ENCODE measurements at regions of chr10 and their contacts with region 1.

Region 1: GRCh38 chr10:132536971-132537712 is 445 bp upstream of the INPP5A start:
- DNase-seq: peak; percentile 100
- ATAC-seq: peak; percentile 89
- H3K4me3 Mint-ChIP-seq: peak overlapping the region; percentile 64
- H3K27ac Mint-ChIP-seq: no peak overlapping the region
- H3K4me1 Mint-ChIP-seq: peaks cover 52% of the 10 kb centered on the region
- H3K27me3 Mint-ChIP-seq: no peaks in the 10 kb centered on the region
- CTCF ChIP-seq: no peak

Region 2: GRCh38 chr10:132027423-132027983 is 509.6 kb before region 1 on chr10:
- CTCF ChIA-PET with region 1: no interaction called
- POLR2A ChIA-PET with region 1: no interaction called
- intact Hi-C with region 1: no loop called
- DNase-seq: no peak
- ATAC-seq: no peak
- H3K4me3 Mint-ChIP-seq: no peak overlapping the region
- H3K27ac Mint-ChIP-seq: no peak overlapping the region
- H3K4me1 Mint-ChIP-seq: peaks cover 4% of the 10 kb centered on the region
- H3K27me3 Mint-ChIP-seq: peaks cover 33% of the 10 kb centered on the region
- CTCF ChIP-seq: no peak

Region 3: GRCh38 chr10:132307823-132308587 is 229.1 kb before region 1 on chr10 and contains the start of gene STK32C:
- CTCF ChIA-PET with region 1: no interaction called
- POLR2A ChIA-PET with region 1: no interaction called
- intact Hi-C with region 1: loop called (anchors 1 kb)
- DNase-seq: peak; percentile 79
- ATAC-seq: peak; percentile 90
- H3K4me3 Mint-ChIP-seq: peak within 1 kb of the TSS; percentile 86
- H3K27ac Mint-ChIP-seq: no peak within 1 kb of the TSS
- H3K4me1 Mint-ChIP-seq: peaks cover 11% of the 10 kb centered on the region
- H3K27me3 Mint-ChIP-seq: peaks cover 11% of the 10 kb centered on the region
- CTCF ChIP-seq: no peak
- total RNA-seq, gene STK32C: 11.0 and 13.8 TPM in 2 replicates

Region 4: GRCh38 chr10:132396495-132397035 is 140.6 kb before region 1 on chr10:
- CTCF ChIA-PET with region 1: no interaction called
- POLR2A ChIA-PET with region 1: interaction called, 3 read pairs
- intact Hi-C with region 1: loop called (anchors 1 kb)
- DNase-seq: peak; percentile 74
- ATAC-seq: peak; percentile 71
- H3K4me3 Mint-ChIP-seq: no peak overlapping the region
- H3K27ac Mint-ChIP-seq: no peak overlapping the region
- H3K4me1 Mint-ChIP-seq: peaks cover 59% of the 10 kb centered on the region
- H3K27me3 Mint-ChIP-seq: no peaks in the 10 kb centered on the region
- CTCF ChIP-seq: no peak

Region 5: GRCh38 chr10:132407814-132408278 is 129.3 kb before region 1 on chr10:
- CTCF ChIA-PET with region 1: no interaction called
- POLR2A ChIA-PET with region 1: no interaction called
- intact Hi-C with region 1: no loop called
- DNase-seq: no peak
- ATAC-seq: peak; percentile 53
- H3K4me3 Mint-ChIP-seq: peak overlapping the region; percentile 19
- H3K27ac Mint-ChIP-seq: peak overlapping the region; percentile 35
- H3K4me1 Mint-ChIP-seq: peaks cover 35% of the 10 kb centered on the region
- H3K27me3 Mint-ChIP-seq: no peaks in the 10 kb centered on the region
- CTCF ChIP-seq: no peak

Region 6: DNA sequence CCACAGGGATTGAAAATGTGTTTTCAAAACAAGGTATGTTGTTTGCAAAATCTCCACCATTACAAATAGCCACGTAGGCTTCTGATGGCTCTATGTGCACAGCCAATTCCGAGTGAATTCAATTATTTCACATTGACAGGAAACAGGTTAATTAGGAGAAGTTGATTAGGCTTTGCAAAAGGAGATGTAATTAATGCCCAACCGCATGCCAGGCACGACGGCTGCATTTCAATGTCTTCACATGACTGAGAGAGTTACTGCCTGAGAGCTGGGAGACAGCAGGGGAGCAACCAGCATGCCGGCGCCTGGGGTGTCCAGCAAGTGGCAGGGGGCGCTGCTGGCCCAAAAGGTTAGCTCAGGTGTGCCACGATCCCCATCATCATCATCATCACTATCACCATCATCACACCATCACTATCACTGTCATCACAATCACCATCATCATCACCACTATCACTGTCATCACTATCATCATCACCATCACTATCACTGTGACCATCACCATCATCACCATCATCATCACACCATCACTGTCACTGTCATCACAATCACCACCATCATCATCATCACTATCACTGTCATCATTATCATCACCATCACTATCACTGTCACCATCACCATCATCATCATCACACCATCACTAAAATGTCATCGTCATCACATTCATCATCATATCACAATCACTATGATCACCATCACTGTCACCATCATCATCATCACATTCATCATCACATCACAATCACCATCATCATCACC is 109.9 kb before region 1 on chr10:
- CTCF ChIA-PET with region 1: no interaction called
- POLR2A ChIA-PET with region 1: no interaction called
- intact Hi-C with region 1: no loop called
- DNase-seq: no peak
- ATAC-seq: no peak
- H3K4me3 Mint-ChIP-seq: no peak overlapping the region
- H3K27ac Mint-ChIP-seq: no peak overlapping the region
- H3K4me1 Mint-ChIP-seq: peaks cover 25% of the 10 kb centered on the region
- H3K27me3 Mint-ChIP-seq: no peaks in the 10 kb centered on the region
- CTCF ChIP-seq: no peak

Region 7: GRCh38 chr10:132516771-132517725 is 20.1 kb before region 1 on chr10:
- CTCF ChIA-PET with region 1: interaction called, 3 read pairs
- POLR2A ChIA-PET with region 1: interaction called, 4 read pairs
- intact Hi-C with region 1: loop called (anchors 1 kb)
- DNase-seq: peak; percentile 14
- ATAC-seq: no peak
- H3K4me3 Mint-ChIP-seq: no peak overlapping the region
- H3K27ac Mint-ChIP-seq: no peak overlapping the region
- H3K4me1 Mint-ChIP-seq: peaks cover 4% of the 10 kb centered on the region
- H3K27me3 Mint-ChIP-seq: no peaks in the 10 kb centered on the region
- CTCF ChIP-seq: no peak

Region 8: GRCh38 chr10:132571650-132572535 is 34.8 kb after region 1 on chr10:
- CTCF ChIA-PET with region 1: interaction called, 3 read pairs
- POLR2A ChIA-PET with region 1: interaction called, 22 read pairs
- intact Hi-C with region 1: loop called (anchors 1 kb)
- DNase-seq: peak; percentile 78
- ATAC-seq: peak; percentile 77
- H3K4me3 Mint-ChIP-seq: no peak overlapping the region
- H3K27ac Mint-ChIP-seq: no peak overlapping the region
- H3K4me1 Mint-ChIP-seq: peaks cover 6% of the 10 kb centered on the region
- H3K27me3 Mint-ChIP-seq: no peaks in the 10 kb centered on the region
- CTCF ChIP-seq: no peak

Region 9: DNA sequence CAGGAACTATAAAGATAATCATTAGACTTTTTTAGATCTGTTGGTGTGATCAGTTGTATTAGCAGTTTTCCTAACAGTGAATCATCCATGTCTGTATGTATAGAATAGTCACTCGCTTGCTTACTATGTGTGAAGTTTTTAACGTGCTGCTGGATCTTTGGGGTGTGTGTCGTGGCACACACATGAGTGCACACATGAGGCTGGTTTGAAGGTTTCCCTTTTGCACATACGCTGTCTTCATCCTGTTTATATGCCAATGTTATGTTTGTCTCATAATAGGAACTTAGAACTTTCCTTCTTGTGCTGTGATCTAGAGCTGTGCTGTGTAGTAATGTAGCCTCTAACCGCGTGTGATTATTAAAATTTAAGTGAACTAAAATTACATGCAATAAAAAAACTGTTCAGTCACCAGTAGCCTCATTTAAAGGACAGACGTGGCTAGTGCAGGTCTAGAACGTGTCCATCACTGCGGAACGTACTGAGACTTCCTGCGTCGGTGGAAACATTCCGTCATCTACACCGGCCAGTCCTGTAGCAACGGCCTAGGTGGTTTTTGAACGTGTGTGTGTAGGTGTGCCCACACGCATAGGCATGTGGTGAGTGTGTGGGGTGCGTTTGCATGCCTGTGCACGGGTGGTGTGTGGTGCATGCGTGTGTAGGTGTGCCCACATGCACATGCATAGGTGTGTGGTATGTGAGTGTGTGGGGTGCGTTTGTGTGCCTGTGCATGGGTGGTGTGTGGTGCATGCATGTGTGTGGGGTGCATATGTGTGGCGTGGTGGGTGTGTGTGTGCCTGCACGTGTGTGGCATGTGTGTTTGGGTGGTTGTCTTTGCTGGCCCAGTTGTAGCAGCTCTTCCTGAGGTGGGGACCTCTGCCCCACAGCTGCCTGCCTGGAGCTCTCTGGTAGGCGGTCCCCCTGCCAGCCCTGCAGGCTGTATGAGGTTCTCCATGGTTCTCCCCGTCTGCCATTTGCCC is 57.0 kb after region 1 on chr10:
- CTCF ChIA-PET with region 1: interaction called, 4 read pairs
- POLR2A ChIA-PET with region 1: interaction called, 3 read pairs
- intact Hi-C with region 1: loop called (anchors 1 kb)
- DNase-seq: no peak
- ATAC-seq: peak; percentile 74
- H3K4me3 Mint-ChIP-seq: peak overlapping the region; percentile 70
- H3K27ac Mint-ChIP-seq: peak overlapping the region; percentile 90
- H3K4me1 Mint-ChIP-seq: peaks cover 86% of the 10 kb centered on the region
- H3K27me3 Mint-ChIP-seq: no peaks in the 10 kb centered on the region
- CTCF ChIP-seq: no peak

Region 10: GRCh38 chr10:132994185-132994796 is 457.1 kb after region 1 on chr10:
- CTCF ChIA-PET with region 1: no interaction called
- POLR2A ChIA-PET with region 1: no interaction called
- intact Hi-C with region 1: no loop called
- DNase-seq: no peak
- ATAC-seq: no peak
- H3K4me3 Mint-ChIP-seq: no peak overlapping the region
- H3K27ac Mint-ChIP-seq: no peak overlapping the region
- H3K4me1 Mint-ChIP-seq: no peaks in the 10 kb centered on the region
- H3K27me3 Mint-ChIP-seq: no peaks in the 10 kb centered on the region
- CTCF ChIP-seq: no peak

Measured in activated B cell treated with CpG ODN at 0.5 μM for 24 hours (primary cell).